ENCODE measurements at regions of chr12 and their contacts with region 1.

Region 1: GRCh38 chr12:89709157-89709994 is 738 bp upstream of the ATP2B1 start:
- DNase-seq: peak; percentile 98 to 100 (median 99)
- ATAC-seq: peak; percentile 77
- H3K4me3 ChIP-seq: peak overlapping the region; percentile 86 to 96
- H3K4me3 Mint-ChIP-seq: peak overlapping the region; percentile 93
- H3K27ac ChIP-seq: peak overlapping the region; percentile 96 to 99
- H3K27ac Mint-ChIP-seq: peak overlapping the region; percentile 96
- H3K4me1 ChIP-seq: peaks cover 31% of the 10 kb centered on the region
- H3K4me1 Mint-ChIP-seq: peaks cover 36% of the 10 kb centered on the region
- H3K27me3 ChIP-seq: no peaks in the 10 kb centered on the region
- H3K27me3 Mint-ChIP-seq: no peaks in the 10 kb centered on the region
- CTCF ChIP-seq: no peak

Region 2: GRCh38 chr12:88141770-88142609 is 1567.4 kb before region 1 on chr12 and contains the starts of genes CEP290 and TMTC3:
- CTCF ChIA-PET with region 1: no interaction called
- POLR2A ChIA-PET with region 1: no interaction called
- intact Hi-C with region 1: loop called (anchors 5 kb)
- DNase-seq: peak; percentile 81 to 99 (median 90)
- ATAC-seq: peak; percentile 92
- H3K4me3 ChIP-seq: peak within 1 kb of the TSS; percentile 82 to 84
- H3K4me3 Mint-ChIP-seq: peak within 1 kb of the TSS; percentile 99
- H3K27ac ChIP-seq: peak within 1 kb of the TSS; percentile 75 to 85
- H3K27ac Mint-ChIP-seq: peak within 1 kb of the TSS; percentile 97
- H3K4me1 ChIP-seq: peaks cover 18% of the 10 kb centered on the region
- H3K4me1 Mint-ChIP-seq: peaks cover 48% of the 10 kb centered on the region
- H3K27me3 ChIP-seq: no peaks in the 10 kb centered on the region
- H3K27me3 Mint-ChIP-seq: no peaks in the 10 kb centered on the region
- CTCF ChIP-seq: no peak
- total RNA-seq, gene CEP290: 7.7 to 10.7 TPM
- total RNA-seq, gene TMTC3: 3.9 to 4.4 TPM

Region 3: DNA sequence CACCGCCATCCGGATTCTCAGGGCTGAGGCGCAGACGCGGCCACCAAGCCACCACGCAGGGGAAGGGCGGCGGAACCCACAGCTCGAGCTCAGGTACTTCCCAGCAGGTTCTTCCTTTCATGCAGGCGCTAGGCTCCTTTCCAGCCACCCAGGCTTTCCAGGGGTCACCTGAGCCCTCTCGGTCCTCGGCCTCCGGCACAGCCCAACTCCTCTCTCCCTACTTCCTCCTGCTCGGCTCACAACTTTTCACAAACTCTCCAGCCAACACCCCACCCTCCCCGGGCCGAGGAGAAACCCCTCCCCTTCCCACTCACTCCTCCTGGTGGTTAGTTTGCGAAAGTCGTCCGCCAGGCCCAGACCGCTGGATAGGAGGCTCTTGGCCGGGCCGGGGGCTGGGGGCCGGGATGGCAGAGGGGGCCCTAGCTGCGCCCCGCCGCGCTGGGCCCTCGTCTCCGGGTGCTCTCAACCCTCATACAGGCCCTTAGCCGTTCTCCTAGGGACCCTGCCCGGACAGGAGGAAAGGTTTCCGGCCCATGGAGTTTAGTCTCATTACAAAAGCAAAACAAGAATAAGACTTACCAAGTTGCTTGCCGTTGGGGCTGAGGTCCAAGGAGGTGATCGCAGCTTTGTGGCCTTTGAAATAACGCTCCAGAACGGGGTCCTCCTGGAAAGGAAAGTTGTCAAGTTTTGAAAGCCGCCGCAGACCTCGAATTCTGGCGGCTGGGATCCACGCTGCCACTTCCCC is 184.7 kb before region 1 on chr12 and contains the start of gene GALNT4:
- CTCF ChIA-PET with region 1: no interaction called
- POLR2A ChIA-PET with region 1: interaction called, 5 read pairs
- intact Hi-C with region 1: loop called in 1 of 2 experiments (anchors 1 kb)
- DNase-seq: peak; percentile 45 to 88 (median 74)
- ATAC-seq: peak; percentile 70
- H3K4me3 ChIP-seq: peak within 1 kb of the TSS; percentile 78 to 93
- H3K4me3 Mint-ChIP-seq: peak within 1 kb of the TSS; percentile 92
- H3K27ac ChIP-seq: peak within 1 kb of the TSS; percentile 70 to 86
- H3K27ac Mint-ChIP-seq: peak within 1 kb of the TSS; percentile 87
- H3K4me1 ChIP-seq: peaks cover 28% of the 10 kb centered on the region
- H3K4me1 Mint-ChIP-seq: peaks cover 61% of the 10 kb centered on the region
- H3K27me3 ChIP-seq: no peaks in the 10 kb centered on the region
- H3K27me3 Mint-ChIP-seq: no peaks in the 10 kb centered on the region
- CTCF ChIP-seq: peak; percentile 41
- total RNA-seq, gene GALNT4: 4.6 to 5.3 TPM

Region 4: GRCh38 chr12:89689306-89689705 is 20.1 kb before region 1 on chr12:
- CTCF ChIA-PET with region 1: interaction called, 3 read pairs
- POLR2A ChIA-PET with region 1: interaction called, 9 read pairs
- intact Hi-C with region 1: loop called in 1 of 2 experiments (anchors 2 kb)
- DNase-seq: no peak
- ATAC-seq: no peak
- H3K4me3 ChIP-seq: no peak overlapping the region
- H3K4me3 Mint-ChIP-seq: no peak overlapping the region
- H3K27ac ChIP-seq: no peak overlapping the region
- H3K27ac Mint-ChIP-seq: no peak overlapping the region
- H3K4me1 ChIP-seq: peaks cover 20% of the 10 kb centered on the region
- H3K4me1 Mint-ChIP-seq: peaks cover 77% of the 10 kb centered on the region
- H3K27me3 ChIP-seq: no peaks in the 10 kb centered on the region
- H3K27me3 Mint-ChIP-seq: no peaks in the 10 kb centered on the region
- CTCF ChIP-seq: no peak

Region 5: DNA sequence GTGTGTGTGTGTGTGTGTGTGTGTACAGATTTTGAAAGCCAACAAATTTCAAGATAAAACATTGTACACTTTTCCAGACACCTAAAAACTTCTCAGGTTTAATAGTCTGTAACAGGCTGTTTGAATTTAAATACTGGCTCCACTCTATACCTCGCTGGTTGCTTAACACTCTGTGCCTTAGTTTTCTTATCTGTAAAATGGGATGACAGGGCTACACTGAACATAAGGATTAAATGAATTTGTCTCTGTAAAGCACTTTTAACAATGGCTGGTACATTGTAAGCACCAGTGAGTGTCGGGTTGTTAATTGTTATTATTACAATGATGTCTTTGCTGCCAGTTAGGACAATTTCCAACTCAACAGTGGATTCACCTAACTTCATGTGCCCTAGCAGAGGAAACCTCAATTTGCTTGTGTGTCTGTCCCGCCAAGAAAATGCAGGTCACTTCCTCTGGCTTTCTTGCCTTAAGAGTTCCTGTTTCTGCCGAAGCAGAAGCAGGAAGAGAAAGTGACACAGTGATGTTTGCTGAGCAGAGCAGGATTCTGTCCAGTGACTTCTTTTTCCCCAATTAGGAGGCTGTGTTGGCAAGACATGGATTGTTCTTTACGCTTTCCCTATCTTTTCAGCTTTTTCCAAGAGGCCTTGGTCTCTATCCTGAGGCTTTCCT is 153.3 kb after region 1 on chr12:
- CTCF ChIA-PET with region 1: interaction called, 4 read pairs
- POLR2A ChIA-PET with region 1: interaction called, 38 read pairs
- intact Hi-C with region 1: loop called (anchors 1 to 5 kb)
- DNase-seq: peak in 7 of 9 experiments; percentile 27 to 82 (median 50)
- ATAC-seq: peak; percentile 30
- H3K4me3 ChIP-seq: peak overlapping the region; percentile 29 to 46
- H3K4me3 Mint-ChIP-seq: peak overlapping the region; percentile 80
- H3K27ac ChIP-seq: peak overlapping the region; percentile 79 to 88
- H3K27ac Mint-ChIP-seq: peak overlapping the region; percentile 93
- H3K4me1 ChIP-seq: peaks cover 36% of the 10 kb centered on the region
- H3K4me1 Mint-ChIP-seq: peaks cover 54% of the 10 kb centered on the region
- H3K27me3 ChIP-seq: no peaks in the 10 kb centered on the region
- H3K27me3 Mint-ChIP-seq: no peaks in the 10 kb centered on the region
- CTCF ChIP-seq: no peak

Region 6: GRCh38 chr12:89927226-89927698 is 217.9 kb after region 1 on chr12:
- CTCF ChIA-PET with region 1: no interaction called
- POLR2A ChIA-PET with region 1: no interaction called
- intact Hi-C with region 1: no loop called
- DNase-seq: peak in 1 of 9 experiments; percentile 36
- ATAC-seq: no peak
- H3K4me3 ChIP-seq: no peak overlapping the region
- H3K4me3 Mint-ChIP-seq: peak overlapping the region; percentile 36
- H3K27ac ChIP-seq: no peak overlapping the region
- H3K27ac Mint-ChIP-seq: peak overlapping the region; percentile 22
- H3K4me1 ChIP-seq: no peaks in the 10 kb centered on the region
- H3K4me1 Mint-ChIP-seq: peaks cover 10% of the 10 kb centered on the region
- H3K27me3 ChIP-seq: no peaks in the 10 kb centered on the region
- H3K27me3 Mint-ChIP-seq: no peaks in the 10 kb centered on the region
- CTCF ChIP-seq: no peak

Region 7: GRCh38 chr12:89949457-89950195 is 240.2 kb after region 1 on chr12:
- CTCF ChIA-PET with region 1: interaction called, 3 read pairs
- POLR2A ChIA-PET with region 1: interaction called, 9 read pairs
- intact Hi-C with region 1: loop called (anchors 1 to 2 kb)
- DNase-seq: peak in 8 of 9 experiments; percentile 23 to 95 (median 55)
- ATAC-seq: peak; percentile 90
- H3K4me3 ChIP-seq: no peak overlapping the region
- H3K4me3 Mint-ChIP-seq: peak overlapping the region; percentile 53
- H3K27ac ChIP-seq: peak overlapping the region; percentile 25 to 53
- H3K27ac Mint-ChIP-seq: peak overlapping the region; percentile 75
- H3K4me1 ChIP-seq: peaks cover 36% of the 10 kb centered on the region
- H3K4me1 Mint-ChIP-seq: peaks cover 47% of the 10 kb centered on the region
- H3K27me3 ChIP-seq: no peaks in the 10 kb centered on the region
- H3K27me3 Mint-ChIP-seq: no peaks in the 10 kb centered on the region
- CTCF ChIP-seq: peak; percentile 45

Region 8: DNA sequence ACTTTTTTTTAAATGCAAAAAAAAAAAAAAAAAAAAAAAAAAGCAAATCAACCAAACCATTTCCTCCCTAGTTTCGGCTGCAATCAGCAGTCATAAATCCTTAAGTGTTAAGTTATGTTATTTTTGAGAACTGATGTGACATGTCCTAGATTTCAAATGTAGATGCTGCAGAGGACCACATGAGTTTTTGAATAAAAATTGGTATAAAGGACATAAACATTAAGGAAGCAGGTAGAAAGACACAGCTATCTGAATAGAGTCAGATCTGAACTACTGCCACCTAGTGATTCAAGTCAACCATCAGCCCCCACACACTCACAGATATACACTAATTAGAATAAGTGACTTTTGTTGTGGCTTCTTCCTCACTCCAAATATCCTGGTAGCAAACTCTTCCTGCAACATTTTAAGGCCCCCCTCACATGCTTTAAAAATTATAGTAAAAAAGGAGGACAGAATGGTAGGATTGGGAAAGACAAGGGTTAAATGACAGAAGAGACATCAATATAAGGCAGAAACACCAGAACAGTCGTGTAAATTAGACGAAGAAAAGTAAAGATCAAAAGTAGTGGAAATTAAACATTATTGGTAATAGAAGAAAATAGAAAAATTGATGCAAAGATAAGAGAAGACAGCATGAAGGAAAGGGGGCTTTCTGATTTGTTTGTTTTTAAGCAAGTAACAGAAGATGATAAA is 393.7 kb after region 1 on chr12:
- CTCF ChIA-PET with region 1: interaction called, 5 read pairs
- POLR2A ChIA-PET with region 1: interaction called, 3 read pairs
- intact Hi-C with region 1: loop called in 1 of 2 experiments (anchors 5 kb)
- DNase-seq: peak in 3 of 9 experiments; percentile 6 to 65 (median 53)
- ATAC-seq: peak; percentile 56
- H3K4me3 ChIP-seq: no peak overlapping the region
- H3K4me3 Mint-ChIP-seq: peak overlapping the region; percentile 68
- H3K27ac ChIP-seq: no peak overlapping the region
- H3K27ac Mint-ChIP-seq: no peak overlapping the region
- H3K4me1 ChIP-seq: no peaks in the 10 kb centered on the region
- H3K4me1 Mint-ChIP-seq: peaks cover 4% of the 10 kb centered on the region
- H3K27me3 ChIP-seq: no peaks in the 10 kb centered on the region
- H3K27me3 Mint-ChIP-seq: peaks cover 2% of the 10 kb centered on the region
- CTCF ChIP-seq: peak; percentile 70

Measured in CD8-positive, alpha-beta T cell (primary cell).